ENCODE measurements at regions of chr12 and their contacts with region 1.

Region 1: DNA sequence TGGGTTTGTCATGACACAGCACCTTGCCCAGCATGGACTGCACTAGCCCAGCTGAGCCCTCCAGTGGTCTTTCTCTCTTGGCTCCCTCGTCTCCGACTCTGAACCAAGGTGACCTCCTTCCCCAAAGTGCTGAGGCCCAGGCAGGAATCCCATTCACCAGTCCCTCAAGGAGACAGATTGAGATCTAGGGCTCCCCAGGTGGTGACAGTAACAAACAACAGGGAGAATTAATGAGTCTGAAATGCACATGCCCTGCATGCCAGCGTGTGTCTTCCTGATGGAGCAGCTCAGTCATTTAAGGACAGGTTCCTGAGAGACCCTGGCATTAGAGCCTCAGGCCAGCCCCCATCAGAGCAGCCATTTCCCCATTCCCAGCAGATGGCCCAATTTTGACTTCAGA is 51.4 kb upstream of the OAS1 start:
- DNase-seq: no peak
- ATAC-seq: no peak
- H3K4me3 ChIP-seq: no peak overlapping the region
- H3K27ac ChIP-seq: no peak overlapping the region
- H3K4me1 ChIP-seq: no peaks in the 10 kb centered on the region
- H3K27me3 ChIP-seq: peaks cover 0 to 7% (median 0%) of the 10 kb centered on the region in 3 donors
- CTCF ChIP-seq: no peak
- POLR2A ChIP-seq: no peak

Region 2: DNA sequence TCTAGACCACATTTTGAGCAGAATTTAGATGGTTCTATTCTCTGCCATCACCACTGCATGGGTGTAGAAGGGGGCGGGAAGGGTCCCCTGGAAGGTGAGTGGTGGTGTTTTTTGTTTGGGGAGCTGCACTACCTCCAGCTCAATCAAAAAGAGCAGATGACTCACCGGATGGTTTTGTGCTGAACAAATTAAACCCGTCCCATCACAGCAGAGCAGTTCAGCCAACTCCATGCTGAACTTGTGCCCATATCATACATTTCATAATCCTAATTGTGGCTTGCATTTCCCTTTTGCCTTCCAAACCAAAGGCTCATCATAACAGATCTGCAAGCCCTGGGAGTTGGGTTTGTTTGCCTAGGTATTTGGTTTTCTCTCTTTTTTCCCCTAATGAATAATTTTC is 116.8 kb before region 1 on chr12:
- in situ Hi-C with region 1: no loop called
- intact Hi-C with region 1: loop called (anchors 10 kb)
- DNase-seq: no peak
- ATAC-seq: no peak
- H3K4me3 ChIP-seq: no peak overlapping the region
- H3K27ac ChIP-seq: no peak overlapping the region
- H3K4me1 ChIP-seq: no peaks in the 10 kb centered on the region
- H3K27me3 ChIP-seq: no peaks in the 10 kb centered on the region
- CTCF ChIP-seq: no peak
- POLR2A ChIP-seq: no peak

Region 3: DNA sequence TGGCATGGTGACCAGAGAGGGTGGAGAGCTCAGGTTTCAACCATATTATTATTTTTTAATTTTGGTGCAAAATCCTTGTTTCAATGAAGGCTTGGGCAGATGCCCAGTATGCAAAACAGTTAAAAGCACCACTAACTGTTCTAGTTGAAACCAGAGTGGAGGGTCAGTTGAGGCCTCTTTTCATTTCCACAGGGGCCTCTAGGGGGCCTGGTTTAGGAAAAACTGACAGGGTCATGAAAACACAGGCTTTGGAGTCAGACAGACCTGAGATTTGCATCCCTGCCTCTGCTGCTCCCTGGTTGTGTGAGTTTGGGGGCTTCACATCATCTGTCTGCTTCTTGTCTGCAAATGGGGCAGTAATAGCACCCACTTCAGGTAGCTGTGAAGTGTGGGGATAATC is 67.2 kb before region 1 on chr12:
- in situ Hi-C with region 1: no loop called
- intact Hi-C with region 1: no loop called
- DNase-seq: no peak
- ATAC-seq: no peak
- H3K4me3 ChIP-seq: no peak overlapping the region
- H3K27ac ChIP-seq: no peak overlapping the region
- H3K4me1 ChIP-seq: no peaks in the 10 kb centered on the region
- H3K27me3 ChIP-seq: no peaks in the 10 kb centered on the region
- CTCF ChIP-seq: no peak
- POLR2A ChIP-seq: no peak

Region 4: GRCh38 chr12:112822056-112822455 is 33.3 kb before region 1 on chr12:
- in situ Hi-C with region 1: no loop called
- intact Hi-C with region 1: loop called (anchors 1 kb)
- DNase-seq: no peak
- ATAC-seq: no peak
- H3K4me3 ChIP-seq: no peak overlapping the region
- H3K27ac ChIP-seq: no peak overlapping the region
- H3K4me1 ChIP-seq: no peaks in the 10 kb centered on the region
- H3K27me3 ChIP-seq: no peaks in the 10 kb centered on the region
- CTCF ChIP-seq: no peak
- POLR2A ChIP-seq: no peak

Region 5: DNA sequence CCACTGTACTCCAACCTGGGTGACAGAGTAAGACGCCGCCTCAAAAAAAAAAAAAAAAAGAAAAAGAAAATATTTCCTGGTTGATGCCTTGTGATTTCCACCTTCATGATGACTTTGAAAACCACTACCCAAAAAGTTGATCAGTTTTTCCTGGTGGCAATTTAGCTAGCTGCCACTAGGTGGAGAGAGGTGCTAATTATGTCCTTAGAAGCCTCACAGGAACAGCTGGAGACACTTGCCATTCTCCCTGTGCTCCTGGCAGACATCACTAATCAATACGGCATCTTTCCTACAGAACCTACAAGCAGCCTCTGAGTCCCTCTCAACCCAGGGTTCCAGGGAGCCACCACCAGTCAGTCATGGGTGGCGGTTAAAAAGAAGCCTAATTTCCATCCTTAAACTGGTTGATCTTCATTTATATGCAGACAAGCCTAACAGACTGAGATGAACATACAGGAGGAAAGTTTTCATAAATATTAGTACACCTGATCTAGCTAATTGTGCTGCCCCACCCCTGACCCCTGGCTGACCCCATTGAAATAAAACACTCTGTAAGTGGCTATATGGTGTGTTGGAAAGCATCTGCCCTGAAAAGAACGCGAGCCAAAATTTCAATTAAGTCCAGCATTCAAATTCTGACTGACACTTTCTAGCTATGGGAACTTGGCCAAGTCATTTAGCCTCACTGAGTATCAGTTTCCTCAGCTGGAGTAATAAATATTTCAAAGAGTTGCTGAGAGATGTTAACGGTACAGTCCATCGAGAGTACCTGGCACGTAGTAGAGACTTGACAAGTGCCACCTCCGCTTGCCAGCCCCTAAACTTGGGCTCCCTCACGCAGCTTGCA is 45.1 kb after region 1 on chr12:
- in situ Hi-C with region 1: no loop called
- intact Hi-C with region 1: no loop called
- DNase-seq: no peak
- ATAC-seq: no peak
- H3K4me3 ChIP-seq: no peak overlapping the region
- H3K27ac ChIP-seq: no peak overlapping the region
- H3K4me1 ChIP-seq: no peaks in the 10 kb centered on the region
- H3K27me3 ChIP-seq: no peaks in the 10 kb centered on the region
- CTCF ChIP-seq: peak in 3 of 5 experiments; percentile 25 to 49 (median 29)
- POLR2A ChIP-seq: no peak

Region 6: DNA sequence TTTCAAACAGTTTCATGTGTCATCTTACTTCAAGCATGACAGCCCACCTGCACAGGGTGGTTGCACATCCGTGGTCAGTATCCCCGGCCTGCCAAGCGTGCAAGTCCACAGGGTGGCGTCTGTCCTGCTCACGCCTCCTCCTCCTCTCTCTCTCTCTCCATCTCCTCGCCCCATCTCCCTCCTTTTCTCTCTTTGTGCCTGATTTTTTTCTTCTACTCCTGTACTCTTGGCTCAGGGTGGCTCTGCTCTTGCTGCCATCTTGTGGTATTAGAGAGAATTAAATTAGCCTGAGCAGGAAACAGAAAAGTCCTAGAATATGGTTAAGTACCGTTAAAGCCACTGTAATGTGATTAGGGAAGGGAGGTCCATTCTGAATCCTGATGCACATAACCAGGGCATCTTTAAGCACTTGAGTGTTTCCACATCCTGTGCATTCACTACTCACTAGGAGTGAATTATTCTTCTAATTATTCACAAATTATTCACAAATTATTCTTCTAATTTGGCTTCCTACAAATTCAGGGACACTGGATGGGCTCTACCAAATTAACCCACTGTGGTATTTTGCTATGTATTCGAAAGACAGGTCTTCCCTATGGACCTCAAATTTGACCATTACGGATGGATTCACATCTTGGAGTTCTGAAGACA is 175.6 kb after region 1 on chr12:
- in situ Hi-C with region 1: no loop called
- intact Hi-C with region 1: no loop called
- DNase-seq: no peak
- ATAC-seq: peak in 1 of 2 donors; percentile 36
- H3K4me3 ChIP-seq: no peak overlapping the region
- H3K27ac ChIP-seq: no peak overlapping the region
- H3K4me1 ChIP-seq: no peaks in the 10 kb centered on the region
- H3K27me3 ChIP-seq: no peaks in the 10 kb centered on the region
- CTCF ChIP-seq: peak in 3 of 5 experiments; percentile 27 to 51 (median 32)
- POLR2A ChIP-seq: no peak